ENCODE measurements at regions of chr14 and their contacts with region 1.

Region 1: GRCh38 chr14:24431569-24432258 is 2.0 kb downstream of the KHNYN start:
- DNase-seq: peak; percentile 76 to 91 (median 86)
- ATAC-seq: peak; percentile 77
- H3K4me3 ChIP-seq: peak overlapping the region; percentile 96
- H3K4me3 Mint-ChIP-seq: peak overlapping the region; percentile 82 to 96 (median 91)
- H3K27ac ChIP-seq: peak overlapping the region; percentile 99
- H3K27ac Mint-ChIP-seq: peak overlapping the region; percentile 51 to 97 (median 96)
- H3K4me1 ChIP-seq: peaks cover 24 to 41% of the 10 kb centered on the region in 2 donors
- H3K4me1 Mint-ChIP-seq: peaks cover 19 to 59% (median 53%) of the 10 kb centered on the region in 7 donors
- H3K27me3 ChIP-seq: no peaks in the 10 kb centered on the region
- H3K27me3 Mint-ChIP-seq: no peaks in the 10 kb centered on the region

Region 2: GRCh38 chr14:23555882-23556699 is 875.6 kb before region 1 on chr14 and contains the start of gene THTPA:
- CTCF ChIA-PET with region 1: no interaction called
- POLR2A ChIA-PET with region 1: no interaction called
- intact Hi-C with region 1: loop called in 1 of 2 experiments (anchors 10 kb)
- DNase-seq: peak; percentile 84 to 96 (median 89)
- ATAC-seq: peak; percentile 94
- H3K4me3 ChIP-seq: peak within 1 kb of the TSS; percentile 84
- H3K4me3 Mint-ChIP-seq: peak within 1 kb of the TSS; percentile 80 to 99 (median 96)
- H3K27ac ChIP-seq: peak within 1 kb of the TSS; percentile 83
- H3K27ac Mint-ChIP-seq: peak within 1 kb of the TSS; percentile 78 to 97 (median 94)
- H3K4me1 ChIP-seq: peaks cover 10 to 16% of the 10 kb centered on the region in 2 donors
- H3K4me1 Mint-ChIP-seq: peaks cover 18 to 45% (median 38%) of the 10 kb centered on the region in 7 donors
- H3K27me3 ChIP-seq: no peaks in the 10 kb centered on the region
- H3K27me3 Mint-ChIP-seq: peaks cover 0 to under 1% (median 0%) of the 10 kb centered on the region in 5 donors
- total RNA-seq, gene THTPA: 16.4 to 26.7 (median 19.2) TPM

Region 3: DNA sequence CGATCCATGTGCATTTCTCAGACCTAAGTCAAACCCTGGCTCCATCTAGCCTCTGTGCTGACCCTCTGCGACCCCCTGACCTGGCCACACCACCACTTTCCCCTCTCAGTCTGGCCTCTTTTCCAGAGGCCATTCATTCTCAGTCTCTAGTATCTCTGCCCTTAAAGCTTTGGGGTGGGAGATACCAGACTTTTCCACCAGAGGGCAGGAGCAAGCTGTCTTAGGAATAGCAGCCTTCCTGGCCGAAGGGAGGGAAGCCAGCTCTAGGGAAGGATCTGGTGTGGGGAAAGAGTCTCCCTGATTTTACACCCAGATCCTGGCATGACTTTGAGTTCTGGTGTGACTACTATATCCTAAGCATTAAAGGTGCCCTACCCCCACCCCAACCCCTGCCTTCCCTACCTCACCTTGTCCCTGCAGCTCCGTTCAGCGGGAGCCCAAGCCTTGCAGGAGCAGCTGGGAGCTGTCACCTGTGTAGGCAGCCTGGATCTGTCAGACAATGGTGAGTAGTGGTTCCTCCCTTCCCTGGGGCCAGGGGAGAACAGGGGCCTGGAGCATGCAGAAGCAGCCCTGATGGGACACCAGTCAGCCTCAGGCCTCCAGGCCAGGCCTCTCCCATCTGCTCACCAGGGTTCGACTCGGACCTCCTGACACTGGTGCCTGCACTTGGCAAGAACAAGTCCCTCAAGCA is 373.3 kb before region 1 on chr14:
- CTCF ChIA-PET with region 1: no interaction called
- POLR2A ChIA-PET with region 1: no interaction called
- intact Hi-C with region 1: no loop called
- DNase-seq: peak; percentile 22 to 70 (median 49)
- ATAC-seq: peak; percentile 84
- H3K4me3 ChIP-seq: no peak overlapping the region
- H3K4me3 Mint-ChIP-seq: no peak overlapping the region
- H3K27ac ChIP-seq: no peak overlapping the region
- H3K27ac Mint-ChIP-seq: peak overlapping the region in 5 of 9 donors; percentile 22 to 80 (median 67)
- H3K4me1 ChIP-seq: no peaks in the 10 kb centered on the region
- H3K4me1 Mint-ChIP-seq: peaks cover 0 to 8% (median 2%) of the 10 kb centered on the region in 7 donors
- H3K27me3 ChIP-seq: no peaks in the 10 kb centered on the region
- H3K27me3 Mint-ChIP-seq: peaks cover 0 to 8% (median 2%) of the 10 kb centered on the region in 5 donors

Region 4: DNA sequence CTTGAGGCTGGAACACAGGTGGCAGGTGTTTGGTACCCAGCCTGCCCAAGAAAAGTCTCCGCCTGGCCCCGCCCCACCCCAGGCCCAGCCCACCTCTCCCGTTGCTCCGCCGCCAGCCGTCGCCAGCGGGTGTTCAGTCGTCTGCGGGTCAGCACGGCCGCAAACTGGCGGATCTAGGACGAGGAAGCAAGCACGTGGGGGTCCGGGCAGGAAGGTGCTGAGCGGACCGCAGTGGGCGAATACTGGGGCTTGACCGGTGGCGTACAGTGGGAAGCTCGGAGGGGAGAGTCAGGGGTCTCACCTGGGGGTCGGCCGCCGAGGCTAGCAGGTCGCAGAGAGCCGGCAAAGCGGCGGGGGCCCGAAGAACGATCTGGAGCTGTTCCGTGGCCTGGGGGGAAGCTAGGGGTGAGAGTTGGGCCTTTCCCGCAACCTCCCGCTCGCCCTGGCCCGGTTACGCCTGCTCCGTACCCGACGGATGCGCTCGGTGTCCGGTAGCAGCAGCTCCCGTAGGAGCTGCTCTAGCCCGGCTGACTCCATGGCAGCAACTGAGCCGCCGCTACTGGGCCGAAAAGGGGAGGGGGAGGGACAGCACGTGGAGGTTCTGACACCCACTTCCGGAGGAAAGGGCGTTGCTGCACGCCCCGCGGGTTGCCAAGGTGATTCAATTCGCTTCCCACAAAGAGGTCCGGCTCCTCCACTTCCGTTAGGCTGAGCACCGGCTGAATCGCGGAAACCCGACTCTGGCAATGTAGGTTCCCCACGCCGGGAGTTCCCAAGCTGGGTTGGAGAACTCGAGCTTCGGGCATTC is 243.3 kb before region 1 on chr14 and contains the start of gene IPO4:
- CTCF ChIA-PET with region 1: interaction called, 4 read pairs
- POLR2A ChIA-PET with region 1: no interaction called
- intact Hi-C with region 1: loop called in 1 of 2 experiments (anchors 1 kb)
- DNase-seq: peak; percentile 75 to 97 (median 94)
- ATAC-seq: peak; percentile 97
- H3K4me3 ChIP-seq: peak within 1 kb of the TSS; percentile 89
- H3K4me3 Mint-ChIP-seq: peak within 1 kb of the TSS; percentile 89 to 96 (median 90)
- H3K27ac ChIP-seq: peak within 1 kb of the TSS; percentile 83
- H3K27ac Mint-ChIP-seq: peak within 1 kb of the TSS; percentile 82 to 96 (median 92)
- H3K4me1 ChIP-seq: peaks cover 15 to 16% of the 10 kb centered on the region in 2 donors
- H3K4me1 Mint-ChIP-seq: peaks cover 24 to 53% (median 47%) of the 10 kb centered on the region in 7 donors
- H3K27me3 ChIP-seq: no peaks in the 10 kb centered on the region
- H3K27me3 Mint-ChIP-seq: no peaks in the 10 kb centered on the region
- total RNA-seq, gene IPO4: 21.5 to 45.2 (median 42.2) TPM

Region 5: GRCh38 chr14:24262821-24263761 is 168.6 kb before region 1 on chr14 and contains the start of gene TGM1:
- CTCF ChIA-PET with region 1: no interaction called
- POLR2A ChIA-PET with region 1: no interaction called
- intact Hi-C with region 1: no loop called
- DNase-seq: no peak
- ATAC-seq: no peak
- H3K4me3 ChIP-seq: no peak within 1 kb of the TSS
- H3K4me3 Mint-ChIP-seq: no peak within 1 kb of the TSS
- H3K27ac ChIP-seq: no peak within 1 kb of the TSS
- H3K27ac Mint-ChIP-seq: peak within 1 kb of the TSS in 3 of 9 donors; percentile 46 to 68 (median 56)
- H3K4me1 ChIP-seq: no peaks in the 10 kb centered on the region
- H3K4me1 Mint-ChIP-seq: peaks cover 0 to 7% (median 0%) of the 10 kb centered on the region in 7 donors
- H3K27me3 ChIP-seq: no peaks in the 10 kb centered on the region
- H3K27me3 Mint-ChIP-seq: no peaks in the 10 kb centered on the region
- total RNA-seq, gene TGM1: 4.8 to 12.9 (median 7.1) TPM

Region 6: DNA sequence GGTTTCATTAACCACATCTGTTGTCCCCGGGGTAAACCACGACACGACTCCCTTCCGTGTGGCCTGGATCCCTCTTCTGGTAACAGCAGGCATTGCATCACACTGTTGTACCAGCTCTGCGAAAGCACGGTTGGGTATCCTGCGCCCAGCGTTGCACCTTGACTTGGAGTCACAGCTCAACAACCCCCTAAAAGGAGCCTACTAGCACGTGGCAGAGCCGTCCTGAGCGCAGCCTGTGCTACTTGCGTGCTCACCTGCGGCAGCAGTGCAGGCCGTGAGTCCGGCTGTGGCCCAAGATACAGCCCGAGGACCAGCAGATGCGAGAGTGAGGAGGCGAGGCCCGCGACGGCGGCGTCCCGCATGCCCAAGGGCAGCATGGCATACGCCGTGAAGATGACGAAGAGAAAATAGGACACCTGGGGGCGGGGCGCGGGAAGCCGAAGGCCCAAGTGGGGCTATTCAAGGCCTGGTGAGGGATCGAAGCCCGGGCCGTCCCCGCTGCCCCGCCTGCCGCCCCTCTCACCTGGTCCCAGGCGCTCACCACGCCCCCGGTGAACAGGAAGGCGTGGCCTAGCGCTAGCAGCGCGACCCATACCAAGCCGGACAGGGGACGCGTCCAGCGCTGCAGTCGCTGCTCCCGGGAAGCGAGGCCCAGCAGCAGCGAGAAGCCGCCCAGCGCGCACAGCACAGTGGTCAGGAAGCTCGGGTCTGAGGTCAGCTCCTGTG is 99.3 kb before region 1 on chr14:
- CTCF ChIA-PET with region 1: interaction called, 317 read pairs
- POLR2A ChIA-PET with region 1: interaction called, 293 read pairs
- intact Hi-C with region 1: loop called (anchors 1 kb)
- DNase-seq: peak; percentile 56 to 93 (median 87)
- ATAC-seq: peak; percentile 90
- H3K4me3 ChIP-seq: peak overlapping the region; percentile 43
- H3K4me3 Mint-ChIP-seq: peak overlapping the region; percentile 66 to 94 (median 83)
- H3K27ac ChIP-seq: no peak overlapping the region
- H3K27ac Mint-ChIP-seq: peak overlapping the region; percentile 57 to 93 (median 84)
- H3K4me1 ChIP-seq: peaks cover 37 to 59% of the 10 kb centered on the region in 2 donors
- H3K4me1 Mint-ChIP-seq: peaks cover 25 to 62% (median 40%) of the 10 kb centered on the region in 7 donors
- H3K27me3 ChIP-seq: peaks cover 7 to 13% of the 10 kb centered on the region in 2 donors
- H3K27me3 Mint-ChIP-seq: peaks cover 9 to 46% (median 17%) of the 10 kb centered on the region in 5 donors

Region 7: DNA sequence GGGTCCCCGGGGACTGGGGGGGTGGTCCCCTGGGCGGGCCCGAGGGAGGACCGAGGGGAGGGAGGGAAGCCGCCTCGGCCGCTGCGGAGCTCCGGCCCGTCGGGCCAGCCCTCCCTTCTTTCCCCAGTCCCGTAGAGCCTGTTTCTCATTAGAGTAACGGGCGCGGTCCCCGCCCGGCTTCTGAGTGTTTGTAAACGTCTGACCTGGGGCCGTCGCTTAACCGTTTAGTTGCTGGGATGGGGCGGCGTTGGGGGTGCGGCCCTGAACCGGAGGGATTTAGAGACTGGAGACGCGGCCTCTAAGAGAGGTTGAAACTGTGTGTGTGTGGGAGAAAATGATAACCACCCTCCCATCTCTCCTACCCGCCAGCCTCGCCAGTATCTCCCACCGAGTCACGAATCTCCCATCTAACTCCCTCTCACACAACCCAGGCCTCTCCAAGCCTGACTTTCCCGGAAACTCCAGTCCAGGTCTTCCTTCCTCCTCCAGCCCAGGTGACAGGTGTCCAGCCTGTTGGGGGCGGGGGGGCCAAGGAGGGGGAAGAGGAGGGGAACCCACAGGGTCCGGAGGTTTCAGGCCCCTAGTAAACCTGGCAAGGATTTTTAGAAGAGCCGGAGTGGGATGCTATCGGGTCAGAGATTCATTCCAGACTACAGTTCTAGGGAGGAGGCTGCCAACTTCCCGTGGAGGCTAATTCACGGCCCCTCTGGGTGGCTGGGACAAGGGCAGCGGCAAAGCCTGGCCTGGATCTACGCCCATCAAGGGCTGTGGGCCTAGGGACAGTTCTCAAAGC is 64.8 kb before region 1 on chr14:
- CTCF ChIA-PET with region 1: interaction called, 19 read pairs
- POLR2A ChIA-PET with region 1: interaction called, 27 read pairs
- intact Hi-C with region 1: loop called (anchors 1 kb)
- DNase-seq: peak in 7 of 9 donors; percentile 12 to 25 (median 19)
- ATAC-seq: peak; percentile 51
- H3K4me3 ChIP-seq: peak overlapping the region; percentile 43
- H3K4me3 Mint-ChIP-seq: peak overlapping the region; percentile 54 to 88 (median 82)
- H3K27ac ChIP-seq: no peak overlapping the region
- H3K27ac Mint-ChIP-seq: peak overlapping the region in 1 of 9 donors; percentile 45
- H3K4me1 ChIP-seq: peaks cover 12 to 26% of the 10 kb centered on the region in 2 donors
- H3K4me1 Mint-ChIP-seq: peaks cover 23 to 36% (median 29%) of the 10 kb centered on the region in 7 donors
- H3K27me3 ChIP-seq: peaks cover 10 to 23% of the 10 kb centered on the region in 2 donors
- H3K27me3 Mint-ChIP-seq: peaks cover 33 to 67% (median 43%) of the 10 kb centered on the region in 5 donors

Measured in naive thymus-derived CD4-positive, alpha-beta T cell (primary cell).